Sigmoid colon (tissue), 7 donors: ENCODE measurements at regions of chr5 and their contacts with region 1.

Region 1: GRCh38 chr5:139177809-139178588 is 20.2 kb downstream of the SIL1 start:
- DNase-seq: peak; percentile 84
- H3K4me3 ChIP-seq: no peak overlapping the region
- H3K27ac ChIP-seq: peak overlapping the region; percentile 69 to 82 (median 74)
- H3K4me1 ChIP-seq: peaks cover 4 to 60% (median 59%) of the 10 kb centered on the region in 4 donors
- H3K27me3 ChIP-seq: no peaks in the 10 kb centered on the region
- CTCF ChIP-seq: no peak
- EP300 ChIP-seq: no peak
- POLR2A ChIP-seq: no peak

Region 2: GRCh38 chr5:139147483-139148087 is 30.4 kb before region 1 on chr5:
- intact Hi-C with region 1: loop called (anchors 2 kb)
- DNase-seq: peak; percentile 95
- H3K4me3 ChIP-seq: no peak overlapping the region
- H3K27ac ChIP-seq: peak overlapping the region; percentile 58 to 76 (median 70)
- H3K4me1 ChIP-seq: peaks cover 0 to 48% (median 47%) of the 10 kb centered on the region in 4 donors
- H3K27me3 ChIP-seq: no peaks in the 10 kb centered on the region
- CTCF ChIP-seq: no peak
- EP300 ChIP-seq: no peak
- POLR2A ChIP-seq: no peak